ENCODE measurements at regions of chr2 and their contacts with region 1.

Region 1: DNA sequence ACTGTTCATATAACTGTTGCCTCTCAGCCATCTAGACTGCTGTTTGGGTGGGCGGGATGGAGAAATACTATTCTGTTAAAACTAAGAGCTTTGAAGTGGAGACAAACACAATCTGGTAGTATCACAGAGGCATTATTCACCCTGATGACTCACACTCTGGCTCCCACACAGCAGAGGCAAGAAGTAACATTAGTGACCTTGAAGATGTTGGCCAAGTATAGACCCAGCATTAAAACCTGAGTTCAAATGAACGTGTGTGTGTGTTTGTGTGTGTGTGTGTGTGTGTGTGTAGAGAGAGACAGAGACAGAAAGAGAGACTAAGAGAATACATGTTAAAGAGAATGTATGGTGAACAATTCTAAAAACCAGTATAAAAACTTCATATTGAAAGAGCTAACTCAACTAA is 22.5 kb upstream of the ACVR1 start:
- DNase-seq: peak; percentile 85
- H3K4me3 Mint-ChIP-seq: peak overlapping the region; percentile 82
- H3K27ac Mint-ChIP-seq: peak overlapping the region; percentile 99
- H3K4me1 Mint-ChIP-seq: peaks cover 75% of the 10 kb centered on the region
- H3K27me3 Mint-ChIP-seq: no peaks in the 10 kb centered on the region

Region 2: GRCh38 chr2:157333304-157334047 is 565.1 kb before region 1 on chr2:
- intact Hi-C with region 1: loop called (anchors 5 kb)
- DNase-seq: no peak
- H3K4me3 Mint-ChIP-seq: no peak overlapping the region
- H3K27ac Mint-ChIP-seq: no peak overlapping the region
- H3K4me1 Mint-ChIP-seq: peaks cover 47% of the 10 kb centered on the region
- H3K27me3 Mint-ChIP-seq: no peaks in the 10 kb centered on the region

Region 3: DNA sequence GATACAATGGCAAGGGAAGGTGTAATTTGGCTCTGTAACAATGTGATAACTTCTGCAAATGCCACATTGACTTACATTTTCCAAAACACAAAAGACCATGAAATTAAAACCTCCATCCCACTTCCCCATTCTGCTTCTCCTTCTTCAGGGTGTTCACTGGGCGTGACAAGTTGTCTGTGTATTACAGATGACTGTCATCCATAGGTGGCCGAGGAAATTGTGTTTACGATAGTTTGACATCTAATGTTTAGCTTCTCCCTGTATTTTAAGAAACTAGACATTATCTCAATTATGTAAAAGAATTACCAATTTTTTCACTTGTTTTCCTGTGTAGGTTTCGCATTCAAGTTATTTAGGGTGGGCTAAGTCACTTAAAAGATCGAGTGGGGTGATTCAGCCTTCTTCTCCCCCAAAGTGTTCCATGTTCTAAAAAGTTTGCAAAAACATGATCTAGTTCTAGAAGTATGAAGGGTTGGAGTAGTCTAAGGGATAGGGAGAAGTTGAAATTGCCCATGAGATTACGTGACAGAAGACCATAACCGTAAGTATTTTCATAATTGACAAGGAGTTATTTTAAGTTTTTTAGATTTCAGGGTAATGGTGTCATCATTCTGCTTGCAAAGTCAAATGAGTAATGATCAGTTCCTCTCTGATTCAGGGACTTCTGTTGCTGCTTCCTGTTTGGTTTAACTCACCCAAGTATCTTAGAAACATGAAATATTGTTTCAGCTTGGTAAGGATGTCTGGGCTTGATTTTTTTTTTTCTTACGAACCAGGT is 429.5 kb before region 1 on chr2:
- intact Hi-C with region 1: loop called (anchors 2 kb)
- DNase-seq: peak; percentile 82
- H3K4me3 Mint-ChIP-seq: peak overlapping the region; percentile 78
- H3K27ac Mint-ChIP-seq: peak overlapping the region; percentile 97
- H3K4me1 Mint-ChIP-seq: peaks cover 82% of the 10 kb centered on the region
- H3K27me3 Mint-ChIP-seq: no peaks in the 10 kb centered on the region

Region 4: DNA sequence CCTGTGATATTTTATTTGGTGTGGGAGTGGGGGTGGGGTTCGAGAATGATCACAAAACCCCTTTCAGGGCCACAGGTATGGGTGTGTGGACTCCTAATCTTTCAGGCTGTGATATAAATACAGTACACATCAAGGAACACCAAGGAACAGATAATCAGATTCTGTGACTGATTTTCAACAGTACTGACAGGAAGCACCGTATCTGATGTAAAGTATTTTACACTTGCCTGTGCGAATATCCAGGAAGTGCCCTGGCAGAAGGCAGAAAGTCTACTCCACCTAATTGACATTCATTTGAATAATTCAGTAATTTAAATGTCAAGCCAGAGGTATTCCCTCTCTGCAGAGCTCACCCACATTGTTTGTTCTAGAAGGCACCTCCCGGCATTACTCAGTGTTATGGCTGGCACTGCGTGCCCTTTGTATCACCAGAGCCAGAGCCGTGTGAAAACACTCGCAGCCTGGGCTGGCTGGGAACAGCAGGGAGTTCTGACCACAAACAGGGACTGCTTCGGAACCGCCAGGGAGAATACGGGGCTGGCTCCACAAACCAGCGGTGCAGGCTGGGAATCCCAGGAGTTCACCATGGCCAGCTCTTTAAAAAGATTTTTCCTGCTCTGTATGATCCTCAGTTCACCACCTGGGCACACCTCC is 114.3 kb before region 1 on chr2:
- intact Hi-C with region 1: loop called (anchors 1 kb)
- DNase-seq: peak; percentile 67
- H3K4me3 Mint-ChIP-seq: peak overlapping the region; percentile 47
- H3K27ac Mint-ChIP-seq: peak overlapping the region; percentile 78
- H3K4me1 Mint-ChIP-seq: peaks cover 70% of the 10 kb centered on the region
- H3K27me3 Mint-ChIP-seq: no peaks in the 10 kb centered on the region

Region 5: DNA sequence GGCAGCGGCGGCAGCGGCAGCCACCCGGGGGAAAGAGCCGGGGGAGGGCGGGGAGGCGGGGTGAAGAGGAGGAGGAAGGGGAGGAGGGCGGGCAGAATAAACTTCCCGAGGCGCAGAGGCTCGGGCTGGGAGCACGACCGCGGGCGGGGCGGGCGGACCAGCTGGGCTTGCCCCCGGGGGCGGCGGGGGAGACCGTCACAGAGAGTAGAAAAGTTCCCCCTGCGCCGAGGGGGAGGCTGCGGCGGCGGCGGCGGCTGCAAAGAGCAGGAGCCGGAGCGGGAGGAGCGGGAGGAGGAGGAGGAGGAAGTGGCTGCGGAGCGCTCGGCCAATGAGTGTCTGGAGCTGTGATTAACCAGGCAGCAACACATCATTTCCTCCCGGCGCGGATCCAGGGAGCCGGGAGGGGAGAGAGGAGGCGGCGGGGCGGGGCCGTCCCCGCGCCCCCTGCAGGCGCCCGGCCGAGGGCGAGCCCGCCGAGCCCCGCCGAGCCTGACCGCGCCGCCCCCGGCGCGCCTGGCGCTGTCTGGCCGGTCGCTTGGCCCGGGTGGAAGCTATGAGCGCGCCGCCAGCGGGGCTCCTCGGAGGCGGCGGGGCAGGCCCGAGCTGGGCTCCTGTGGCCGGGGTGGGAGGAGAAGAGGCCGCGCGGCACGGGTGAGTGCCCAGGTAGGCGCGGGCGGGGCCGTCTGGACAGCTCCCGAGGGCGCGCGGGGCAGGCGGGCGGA is 22.4 kb before region 1 on chr2 and contains the start of gene ACVR1:
- intact Hi-C with region 1: loop called (anchors 1 kb)
- DNase-seq: peak; percentile 95
- H3K4me3 Mint-ChIP-seq: peak within 1 kb of the TSS; percentile 86
- H3K27ac Mint-ChIP-seq: peak within 1 kb of the TSS; percentile 95
- H3K4me1 Mint-ChIP-seq: peaks cover 56% of the 10 kb centered on the region
- H3K27me3 Mint-ChIP-seq: no peaks in the 10 kb centered on the region
- total RNA-seq, gene ACVR1: 45.5 and 50.7 TPM in 2 replicates

Region 6: GRCh38 chr2:159712143-159712928 is 1813.7 kb after region 1 on chr2 and contains the start of gene MARCHF7:
- intact Hi-C with region 1: loop called (anchors 5 kb)
- DNase-seq: peak; percentile 99
- H3K4me3 Mint-ChIP-seq: peak within 1 kb of the TSS; percentile 100
- H3K27ac Mint-ChIP-seq: peak within 1 kb of the TSS; percentile 100
- H3K4me1 Mint-ChIP-seq: peaks cover 32% of the 10 kb centered on the region
- H3K27me3 Mint-ChIP-seq: no peaks in the 10 kb centered on the region
- total RNA-seq, gene MARCHF7: 67.1 and 72.0 TPM in 2 replicates